WTC11 (cell line): ENCODE measurements at regions of chr20 and their contacts with region 1.

Region 1: GRCh38 chr20:34389206-34389953 is 26.3 kb downstream of the ITCH start:
- DNase-seq: no peak
- ATAC-seq: no peak
- H3K4me3 Mint-ChIP-seq: no peak overlapping the region
- H3K27ac Mint-ChIP-seq: peak overlapping the region; percentile 63
- H3K4me1 Mint-ChIP-seq: peaks cover 21% of the 10 kb centered on the region
- H3K27me3 Mint-ChIP-seq: no peaks in the 10 kb centered on the region
- CTCF ChIP-seq: no peak

Region 2: GRCh38 chr20:34302723-34303528 is 86.5 kb before region 1 on chr20 and contains the start of gene AHCY:
- CTCF ChIA-PET with region 1: no interaction called
- POLR2A ChIA-PET with region 1: interaction called, 10 read pairs
- DNase-seq: peak; percentile 99
- ATAC-seq: peak; percentile 88
- H3K4me3 Mint-ChIP-seq: no peak within 1 kb of the TSS; the same call in none of the 2 replicates
- H3K27ac Mint-ChIP-seq: peak within 1 kb of the TSS; percentile 96
- H3K4me1 Mint-ChIP-seq: no peaks in the 10 kb centered on the region; the same call in 1 of the 2 replicates
- H3K27me3 Mint-ChIP-seq: no peaks in the 10 kb centered on the region
- CTCF ChIP-seq: no peak
- total RNA-seq, gene AHCY: 401 to 415 TPM (median 411 TPM) in 3 replicates

Region 3: DNA sequence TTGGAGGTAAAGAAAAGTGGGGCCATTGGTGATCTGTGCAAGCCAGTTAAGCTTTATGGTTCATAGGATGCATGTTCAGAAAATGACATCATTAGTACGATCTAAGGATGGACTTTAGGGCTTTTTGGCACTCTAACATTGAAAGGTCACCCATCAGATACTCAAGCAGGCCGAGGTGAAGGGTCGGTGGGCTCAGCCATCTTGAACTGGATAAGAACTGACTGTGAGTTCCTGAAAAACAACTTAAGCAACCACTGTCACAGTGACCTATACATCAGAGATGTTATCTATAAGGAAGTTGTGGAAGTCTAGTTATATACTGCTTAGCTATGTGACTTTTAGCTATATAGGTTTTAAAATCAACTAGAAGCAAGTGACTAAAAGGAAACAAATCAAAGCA is 39.3 kb before region 1 on chr20:
- CTCF ChIA-PET with region 1: no interaction called
- POLR2A ChIA-PET with region 1: no interaction called
- DNase-seq: no peak
- ATAC-seq: no peak
- H3K4me3 Mint-ChIP-seq: no peak overlapping the region
- H3K27ac Mint-ChIP-seq: 0 out of 2 replicates have a peak overlapping the region, but pooled peaks have one; percentile 32
- H3K4me1 Mint-ChIP-seq: peaks cover 10% of the 10 kb centered on the region
- H3K27me3 Mint-ChIP-seq: no peaks in the 10 kb centered on the region
- CTCF ChIP-seq: no peak